Head of caudate nucleus (tissue), 42 donors: ENCODE measurements at regions of chr1 and their contacts with region 1.

Region 1: DNA sequence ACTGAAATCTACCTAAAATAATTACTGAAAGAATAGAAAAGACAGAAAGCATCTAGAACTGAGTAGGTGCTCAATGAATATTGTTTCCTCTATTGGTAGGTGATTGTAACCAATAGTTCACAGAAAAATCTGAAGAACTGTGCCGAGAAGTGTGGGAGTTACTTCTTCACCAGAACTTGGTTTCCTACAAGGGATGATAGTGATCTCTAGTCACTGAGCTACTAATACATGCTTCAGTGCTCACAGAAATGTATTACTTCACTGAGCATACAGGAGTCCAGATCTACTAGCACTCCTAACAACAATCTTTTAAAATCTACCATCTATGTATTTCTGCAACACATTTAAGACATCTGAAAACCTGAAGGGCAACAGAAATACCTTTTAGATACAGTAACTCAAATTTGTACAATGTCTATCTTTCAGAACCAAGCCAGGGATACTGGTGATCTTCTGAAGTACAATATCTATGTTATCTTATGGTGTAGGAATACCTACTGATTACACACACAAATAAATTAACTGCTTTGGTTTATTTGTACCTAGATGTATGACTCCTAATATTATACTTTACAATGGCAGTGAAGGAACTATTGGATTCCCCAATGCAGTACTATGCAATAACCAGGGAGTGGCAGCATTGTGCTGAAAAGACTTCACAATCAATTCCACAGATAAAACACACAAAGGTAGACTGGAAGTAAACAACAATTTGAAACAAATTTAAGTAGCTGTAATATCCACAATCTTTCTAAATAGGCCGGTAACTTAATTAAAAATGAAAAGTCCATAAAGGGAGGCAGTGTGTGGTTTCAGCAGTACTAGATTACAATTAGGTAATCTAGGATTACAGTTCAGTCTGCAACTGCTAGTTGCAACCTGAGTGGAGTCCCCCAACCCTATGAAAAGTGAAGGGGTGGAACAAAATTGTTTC is 243.0 kb downstream of the SLC45A1 start:
- DNase-seq: peak in 24 of 42 donors; percentile 14 to 73 (median 46)

Region 2: GRCh38 chr1:8374812-8375211 is 186.1 kb before region 1 on chr1:
- intact Hi-C with region 1: no loop called
- DNase-seq: peak in 1 of 42 donors; percentile 29

Region 3: GRCh38 chr1:8671306-8671917 is 110.5 kb after region 1 on chr1:
- intact Hi-C with region 1: loop called (anchors 10 kb)
- DNase-seq: peak in 26 of 42 donors; percentile 18 to 79 (median 44)

Region 4: GRCh38 chr1:8727809-8728213 is 166.9 kb after region 1 on chr1:
- intact Hi-C with region 1: loop called (anchors 10 kb)
- DNase-seq: peak in 27 of 42 donors; percentile 8 to 62 (median 38)

Region 5: DNA sequence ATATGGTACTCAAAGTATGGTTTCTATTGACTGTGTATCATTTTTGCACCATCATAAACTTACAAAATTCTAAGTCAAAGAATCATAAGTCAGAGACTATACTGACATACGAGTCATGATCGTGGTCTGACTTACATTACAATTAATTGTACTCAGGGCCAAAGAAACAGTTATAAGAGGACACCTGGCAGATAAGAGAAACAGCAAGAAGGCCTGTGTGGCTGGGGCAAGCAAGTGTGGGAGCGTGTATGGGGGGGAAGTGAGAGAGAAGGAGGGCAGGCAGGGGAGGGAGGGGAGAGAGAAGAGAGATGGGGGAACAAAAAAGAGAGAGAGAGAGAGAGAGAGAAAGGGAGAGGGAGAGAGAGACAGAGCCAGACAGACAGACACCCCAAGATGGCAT is 185.7 kb after region 1 on chr1:
- intact Hi-C with region 1: no loop called
- DNase-seq: no peak